Activated CD4-positive, alpha-beta T cell treated with anti-CD3 and anti-CD28 coated beads, Interleukin-2, amount 10 ng/mL, durations not matched to agents 24 days and 14 days (primary cell): ENCODE measurements at regions of chr6 and their contacts with region 1.

Region 1: GRCh38 chr6:139249395-139249794 is 42.4 kb downstream of the TXLNB start:
- DNase-seq: peak; percentile 70
- H3K4me3 Mint-ChIP-seq: peak overlapping the region; percentile 52
- H3K27ac Mint-ChIP-seq: peak overlapping the region; percentile 91
- H3K4me1 Mint-ChIP-seq: peaks cover 46% of the 10 kb centered on the region
- H3K27me3 Mint-ChIP-seq: no peaks in the 10 kb centered on the region

Region 2: DNA sequence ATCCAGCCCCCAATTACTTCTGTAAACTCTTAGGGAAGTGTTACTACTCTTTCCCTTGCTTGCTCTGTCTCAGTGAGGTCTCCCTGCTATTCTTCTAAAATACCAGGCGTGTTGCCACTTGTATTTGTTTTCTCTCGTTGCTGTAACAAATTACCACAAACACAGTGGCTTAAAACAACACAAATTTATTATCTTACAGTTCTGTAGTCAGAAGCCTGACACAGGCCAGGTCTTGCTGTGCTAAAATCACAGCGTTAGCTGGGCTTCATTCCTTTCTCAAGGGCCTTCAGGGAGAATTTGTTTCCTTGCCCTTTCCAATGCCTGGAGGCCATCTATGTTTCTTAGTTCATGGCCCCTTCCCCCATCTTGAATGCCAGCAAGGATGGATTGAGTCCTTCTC is 54.6 kb before region 1 on chr6:
- intact Hi-C with region 1: no loop called
- DNase-seq: no peak
- H3K4me3 Mint-ChIP-seq: no peak overlapping the region
- H3K27ac Mint-ChIP-seq: no peak overlapping the region
- H3K4me1 Mint-ChIP-seq: peaks cover 2% of the 10 kb centered on the region
- H3K27me3 Mint-ChIP-seq: no peaks in the 10 kb centered on the region

Region 3: DNA sequence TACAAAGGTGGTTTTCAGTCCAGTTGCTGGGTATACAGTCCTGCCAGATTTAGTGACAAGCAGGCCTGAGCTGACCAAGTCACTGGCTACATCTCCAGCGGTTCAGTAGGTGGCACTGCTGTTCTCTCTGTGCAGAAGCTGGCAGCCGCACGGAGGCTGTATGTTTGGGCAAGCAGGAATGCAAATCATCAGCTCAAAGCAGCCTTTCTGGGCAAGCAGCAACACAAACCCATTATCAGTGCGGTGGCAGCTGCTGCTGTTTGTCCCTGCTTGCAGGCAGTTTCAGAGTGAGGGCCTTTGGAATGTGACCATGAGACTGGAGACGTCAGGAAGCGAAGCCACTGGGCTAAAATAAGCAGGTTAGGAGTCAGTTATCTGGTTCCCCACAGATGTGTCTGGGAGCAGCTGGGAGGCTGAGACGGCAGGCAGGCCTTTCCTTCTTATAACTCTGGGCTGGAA is 30.1 kb before region 1 on chr6:
- intact Hi-C with region 1: loop called (anchors 1 kb)
- DNase-seq: peak; percentile 90
- H3K4me3 Mint-ChIP-seq: peak overlapping the region; percentile 52
- H3K27ac Mint-ChIP-seq: peak overlapping the region; percentile 82
- H3K4me1 Mint-ChIP-seq: peaks cover 10% of the 10 kb centered on the region
- H3K27me3 Mint-ChIP-seq: no peaks in the 10 kb centered on the region

Region 4: GRCh38 chr6:139262519-139263300 is 13.3 kb after region 1 on chr6:
- intact Hi-C with region 1: loop called (anchors 1 kb)
- DNase-seq: peak; percentile 77
- H3K4me3 Mint-ChIP-seq: peak overlapping the region; percentile 75
- H3K27ac Mint-ChIP-seq: peak overlapping the region; percentile 90
- H3K4me1 Mint-ChIP-seq: peaks cover 21% of the 10 kb centered on the region
- H3K27me3 Mint-ChIP-seq: no peaks in the 10 kb centered on the region

Region 5: DNA sequence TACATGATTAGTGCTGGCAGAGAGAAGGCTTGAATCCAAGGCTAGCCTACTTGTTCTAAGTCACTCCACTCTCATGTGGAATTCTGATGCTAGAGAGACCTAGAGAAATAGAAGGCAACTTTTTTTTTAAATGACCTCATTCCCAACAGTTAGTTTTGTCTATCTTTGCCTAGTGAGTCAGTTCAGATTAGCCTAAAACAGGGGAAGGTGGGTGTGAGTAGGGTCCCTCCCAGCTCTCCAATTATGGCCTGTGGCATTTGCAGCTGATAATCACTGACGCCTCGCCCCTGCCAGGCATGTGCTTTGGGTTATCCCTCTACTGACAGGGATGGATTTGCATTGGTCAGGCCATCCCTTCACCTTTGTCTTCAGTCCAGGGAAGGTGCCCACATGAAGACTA is 28.8 kb after region 1 on chr6:
- intact Hi-C with region 1: loop called (anchors 2 kb)
- DNase-seq: peak; percentile 45
- H3K4me3 Mint-ChIP-seq: no peak overlapping the region
- H3K27ac Mint-ChIP-seq: no peak overlapping the region
- H3K4me1 Mint-ChIP-seq: peaks cover 25% of the 10 kb centered on the region
- H3K27me3 Mint-ChIP-seq: no peaks in the 10 kb centered on the region